Adrenal gland (tissue), 19 donors: ENCODE measurements at regions of chr7 and their contacts with region 1.

Region 1: DNA sequence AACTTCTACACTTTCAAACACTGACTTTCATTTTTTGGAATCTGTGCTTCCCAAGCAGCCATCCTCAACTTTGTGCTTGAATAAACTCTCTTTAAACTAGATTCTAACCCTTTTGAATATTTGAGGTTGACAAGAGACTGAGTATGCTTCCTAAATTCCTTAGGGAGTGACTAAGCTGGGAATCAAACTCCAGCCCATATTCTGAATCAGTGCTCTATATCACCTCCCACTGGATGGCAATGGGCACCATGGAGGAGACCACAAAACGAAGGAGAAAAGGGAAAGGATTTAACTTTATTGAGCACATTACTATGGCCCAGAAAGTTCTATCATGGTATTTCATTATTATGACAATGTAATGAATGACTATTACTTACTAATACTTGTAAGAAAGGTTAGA is 17.2 kb upstream of the SLC26A4 start:
- DNase-seq: no peak
- H3K4me3 ChIP-seq: no peak overlapping the region
- H3K27ac ChIP-seq: no peak overlapping the region
- H3K4me1 ChIP-seq: peaks cover 0 to 13% of the 10 kb centered on the region in 2 donors
- H3K27me3 ChIP-seq: no peaks in the 10 kb centered on the region
- CTCF ChIP-seq: no peak
- POLR2A ChIP-seq: no peak

Region 2: DNA sequence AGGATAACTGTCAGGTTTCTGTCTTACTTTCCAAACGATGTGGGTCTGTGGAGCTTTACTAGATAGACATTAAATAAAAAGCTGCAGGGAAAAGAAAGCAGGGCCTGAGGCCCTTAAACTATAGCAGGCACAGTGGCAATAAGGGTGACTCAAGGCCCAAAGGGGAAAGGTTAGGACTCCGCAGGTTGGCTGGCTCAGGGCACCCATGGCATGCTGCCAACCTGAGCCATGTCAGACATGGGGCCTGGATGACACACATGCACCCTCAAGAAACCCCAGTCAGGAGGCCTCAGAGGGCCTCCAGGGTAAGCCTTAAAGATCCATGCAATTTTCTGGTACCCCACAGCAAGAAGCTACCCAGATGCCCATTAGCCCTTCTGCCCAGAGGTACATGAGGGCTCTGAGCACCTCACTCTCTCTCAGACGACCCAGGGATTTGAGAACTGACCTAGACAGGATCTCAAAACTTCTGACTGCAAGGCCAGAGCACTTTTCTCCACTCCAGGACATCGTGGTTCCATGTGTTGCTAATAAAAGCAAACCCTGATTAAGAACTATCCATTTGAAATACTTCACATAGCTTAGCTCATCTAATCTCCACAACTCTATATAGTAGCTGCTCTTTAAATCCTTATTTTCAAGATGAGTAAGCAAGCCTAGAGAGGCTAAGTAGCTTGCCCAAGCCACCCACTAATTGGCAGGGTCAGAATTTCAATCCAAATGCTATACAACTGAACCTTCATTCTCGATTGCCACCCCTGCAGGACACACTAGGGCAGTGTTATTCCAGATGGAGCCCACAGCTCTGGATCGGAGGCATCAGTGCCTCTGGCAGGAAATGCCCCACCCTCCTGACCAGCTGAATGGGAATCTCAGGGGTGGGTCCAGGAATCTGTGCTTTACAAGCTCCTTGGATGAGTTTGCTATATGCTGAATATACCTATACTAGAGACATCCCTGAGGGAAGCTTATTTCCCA is 1929.6 kb before region 1 on chr7:
- intact Hi-C with region 1: loop called in 1 of 2 experiments (anchors 10 kb)
- DNase-seq: peak in 6 of 7 donors; percentile 25 to 63 (median 41)
- H3K4me3 ChIP-seq: no peak overlapping the region
- H3K27ac ChIP-seq: no peak overlapping the region
- H3K4me1 ChIP-seq: peaks cover 0 to 12% of the 10 kb centered on the region in 2 donors
- H3K27me3 ChIP-seq: no peaks in the 10 kb centered on the region
- CTCF ChIP-seq: no peak
- POLR2A ChIP-seq: no peak

Region 3: GRCh38 chr7:108294595-108294994 is 651.2 kb after region 1 on chr7:
- intact Hi-C with region 1: no loop called
- DNase-seq: no peak
- H3K4me3 ChIP-seq: no peak overlapping the region
- H3K27ac ChIP-seq: no peak overlapping the region
- H3K4me1 ChIP-seq: peaks cover 11 to 54% of the 10 kb centered on the region in 2 donors
- H3K27me3 ChIP-seq: no peaks in the 10 kb centered on the region
- CTCF ChIP-seq: no peak
- POLR2A ChIP-seq: no peak